Head of caudate nucleus (tissue), 42 donors: ENCODE measurements at regions of chr11 and their contacts with region 1.

Region 1: DNA sequence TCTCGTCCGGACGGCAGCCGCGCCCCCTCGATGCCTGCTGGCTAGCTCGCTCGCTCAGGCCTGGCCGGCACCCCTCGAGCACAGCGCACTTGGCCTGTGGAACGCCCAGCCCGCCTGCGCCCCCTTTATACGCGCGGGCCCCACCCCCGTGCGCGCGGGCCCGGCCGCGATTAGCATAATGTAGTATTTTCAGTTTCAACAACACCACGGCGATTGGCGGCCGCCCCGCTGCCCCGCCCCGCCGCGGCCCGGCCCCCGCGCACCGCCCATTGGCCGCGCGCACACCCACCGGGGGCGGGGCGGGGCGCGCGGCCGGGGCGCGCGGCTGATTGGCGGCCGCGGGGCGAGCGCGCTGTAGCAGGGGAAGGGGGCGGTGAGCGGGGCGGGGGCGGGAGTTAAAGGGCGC is at the start of gene CDKN1C:
- DNase-seq: peak; percentile 81 to 96 (median 92)

Region 2: DNA sequence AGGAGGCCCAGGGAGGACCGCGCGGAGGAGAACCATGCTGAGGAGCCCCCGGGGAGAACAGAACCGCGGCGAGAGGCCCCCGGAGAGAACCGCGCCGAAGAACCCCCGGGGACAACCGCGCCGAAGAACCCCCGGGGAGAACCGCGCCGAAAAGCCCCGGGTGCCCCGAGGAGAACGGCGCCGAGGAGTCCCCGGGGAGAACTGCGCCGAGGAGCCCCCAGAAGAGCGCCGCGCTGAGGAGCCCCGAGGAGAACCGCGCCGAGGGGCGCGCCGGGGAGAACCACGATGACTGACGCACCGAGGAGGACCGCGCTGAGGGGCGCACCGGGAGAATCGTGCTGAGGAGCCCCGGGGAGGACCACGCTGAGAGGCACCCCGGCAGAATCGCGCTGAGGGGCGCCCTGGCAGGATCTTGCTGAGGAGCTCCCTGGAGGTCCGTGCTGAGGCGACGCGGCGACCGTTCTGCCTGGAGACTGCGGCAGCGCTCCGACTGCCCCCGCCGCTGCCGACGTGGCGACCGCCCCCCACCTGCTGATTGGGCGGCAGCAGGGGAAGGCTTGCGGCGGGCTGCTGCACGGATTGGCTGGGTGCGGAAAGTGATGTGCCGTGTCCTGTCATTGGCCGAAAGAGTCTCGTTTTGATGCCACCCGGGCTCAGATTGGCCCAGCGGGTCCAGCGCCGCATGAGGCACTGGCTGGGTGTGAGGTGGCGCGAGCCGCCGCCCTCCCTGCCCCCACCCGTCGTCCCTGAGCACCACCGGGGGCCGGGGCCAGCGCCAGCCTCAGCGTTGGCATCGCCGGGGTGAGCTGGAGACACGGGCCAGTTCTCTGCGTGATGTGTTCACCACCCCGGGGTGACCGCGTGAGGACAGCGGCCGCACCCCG is 185.9 kb before region 1 on chr11 and contains the start of gene KCNQ1OT1:
- intact Hi-C with region 1: loop called (anchors 10 kb)
- DNase-seq: peak; percentile 82 to 96 (median 91)